K562 (cell line): ENCODE measurements at regions of chr1 and their contacts with region 1.

Region 1: DNA sequence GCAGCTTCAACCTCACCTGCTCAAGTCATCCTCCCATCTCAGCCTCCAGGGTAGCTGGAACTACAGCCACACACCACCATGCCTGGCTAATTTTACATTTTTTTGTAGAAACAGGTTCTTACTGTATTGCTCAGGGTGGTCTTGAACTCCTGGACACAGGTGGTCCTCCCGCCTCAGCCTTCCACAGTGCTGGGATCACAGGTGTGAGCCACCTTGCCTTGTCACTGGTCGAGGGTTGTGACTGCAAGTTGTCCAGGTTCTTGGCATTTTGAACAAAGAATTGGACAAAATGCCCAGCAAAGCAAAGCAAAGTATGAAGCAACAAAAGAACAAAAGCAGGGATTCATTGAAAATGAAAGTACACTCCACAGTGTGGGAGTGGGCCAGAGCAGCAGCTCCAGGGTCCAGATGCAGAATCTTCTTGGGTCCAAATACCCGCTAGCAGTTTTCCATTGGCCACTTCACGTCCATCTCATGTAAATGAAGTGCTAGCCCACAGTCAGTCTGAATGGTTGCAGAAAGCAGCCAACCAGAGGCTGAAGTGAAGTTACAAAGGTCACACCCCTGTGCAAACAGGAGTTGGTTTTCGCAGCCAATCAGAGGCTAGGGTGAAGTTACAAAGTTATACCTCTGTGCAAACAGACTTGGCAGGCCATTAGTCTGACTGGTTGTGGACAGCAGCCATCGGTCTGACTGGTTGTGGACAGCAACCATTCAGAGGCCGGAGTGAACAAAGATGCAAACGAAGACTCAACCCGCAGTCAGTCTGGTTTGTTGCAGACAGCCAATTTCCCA is 109.5 kb upstream of the KIF26B start:
- DNase-seq: peak in 1 of 4 experiments; percentile 35
- ATAC-seq: peak; percentile 75
- H3K4me3 ChIP-seq: no peak overlapping the region
- H3K27ac ChIP-seq: no peak overlapping the region
- H3K4me1 ChIP-seq: peaks cover 0 to 20% of the 10 kb centered on the region in 2 experiments; a peak in 3 of 5 replicates
- H3K27me3 ChIP-seq: no peaks in the 10 kb centered on the region
- CTCF ChIP-seq: no peak
- EP300 ChIP-seq: no peak
- POLR2A ChIP-seq: no peak
- RAD21 ChIP-seq: no peak

Region 2: DNA sequence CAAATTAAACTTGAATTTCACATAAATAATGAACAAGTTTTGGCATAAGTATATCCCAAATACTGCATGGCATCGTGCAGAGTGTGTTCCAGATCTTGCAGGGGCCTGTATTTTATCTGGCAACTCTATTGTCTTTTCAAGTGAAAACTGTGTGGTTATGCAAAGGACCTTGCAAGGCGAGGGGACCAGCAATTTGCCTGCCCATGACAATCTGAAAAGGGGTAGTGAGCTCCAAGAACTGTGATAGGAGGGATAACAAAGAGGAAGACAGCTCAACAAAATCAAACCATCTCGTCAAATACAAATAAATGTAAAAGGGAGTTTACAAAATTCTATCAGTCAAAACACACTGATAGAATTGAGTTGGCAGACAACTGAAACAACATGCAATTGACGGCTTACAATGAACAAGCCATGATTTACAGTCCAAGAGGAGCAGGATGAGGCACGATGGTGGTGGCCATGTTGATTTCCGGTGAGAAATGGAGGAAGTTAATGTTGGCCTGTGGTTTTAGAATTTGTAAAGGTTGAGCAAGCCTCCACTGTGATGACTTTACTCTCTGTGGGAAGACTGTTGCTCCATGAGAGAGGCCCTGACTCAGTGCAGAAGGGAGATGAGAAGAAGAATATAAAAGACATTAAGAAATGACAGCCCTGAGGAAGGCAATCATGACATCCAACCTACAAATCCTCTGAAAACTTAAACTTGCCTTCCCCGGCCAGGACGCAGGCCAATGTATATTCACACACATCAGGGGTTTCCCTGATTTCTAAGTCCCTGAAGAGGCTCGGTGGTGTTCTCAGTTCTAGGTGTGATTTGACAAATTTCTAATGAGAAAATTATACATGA is 725.8 kb before region 1 on chr1:
- CTCF ChIA-PET with region 1: no interaction called
- POLR2A ChIA-PET with region 1: no interaction called
- in situ Hi-C with region 1: no loop called
- intact Hi-C with region 1: no loop called
- DNase-seq: no peak
- ATAC-seq: no peak
- H3K4me3 ChIP-seq: no peak overlapping the region
- H3K27ac ChIP-seq: peak overlapping the region; percentile 36; the same call in 1 of the 3 replicates
- H3K4me1 ChIP-seq: peaks cover 9 to 37% of the 10 kb centered on the region in 2 experiments
- H3K27me3 ChIP-seq: no peaks in the 10 kb centered on the region
- CTCF ChIP-seq: no peak
- EP300 ChIP-seq: no peak
- POLR2A ChIP-seq: no peak
- RAD21 ChIP-seq: no peak

Region 3: GRCh38 chr1:244599937-244600350 is 445.3 kb before region 1 on chr1:
- CTCF ChIA-PET with region 1: interaction called, 8 read pairs
- POLR2A ChIA-PET with region 1: no interaction called
- in situ Hi-C with region 1: loop called (anchors 25 kb)
- intact Hi-C with region 1: loop called (anchors 1 kb)
- DNase-seq: peak; percentile 22 to 50 (median 26)
- ATAC-seq: peak; percentile 33
- H3K4me3 ChIP-seq: no peak overlapping the region
- H3K27ac ChIP-seq: no peak overlapping the region
- H3K4me1 ChIP-seq: no peaks in the 10 kb centered on the region; a peak in 2 of 5 replicates
- H3K27me3 ChIP-seq: peaks cover 23 to 37% of the 10 kb centered on the region in 2 experiments
- CTCF ChIP-seq: no peak
- EP300 ChIP-seq: peak; percentile 23; the same call in 1 of the 2 replicates
- POLR2A ChIP-seq: no peak
- RAD21 ChIP-seq: no peak

Region 4: GRCh38 chr1:244796718-244797406 is 248.4 kb before region 1 on chr1:
- CTCF ChIA-PET with region 1: interaction called, 5 read pairs
- POLR2A ChIA-PET with region 1: no interaction called
- in situ Hi-C with region 1: no loop called
- intact Hi-C with region 1: loop called (anchors 1 kb)
- DNase-seq: peak; percentile 62 to 80 (median 64)
- ATAC-seq: peak; percentile 77
- H3K4me3 ChIP-seq: no peak overlapping the region
- H3K27ac ChIP-seq: no peak overlapping the region
- H3K4me1 ChIP-seq: no peaks in the 10 kb centered on the region; a peak in 2 of 5 replicates
- H3K27me3 ChIP-seq: peaks cover 16 to 47% of the 10 kb centered on the region in 2 experiments
- CTCF ChIP-seq: peak; percentile 71 to 95 (median 91)
- EP300 ChIP-seq: no peak
- POLR2A ChIP-seq: no peak
- RAD21 ChIP-seq: peak; percentile 83 to 96

Region 5: DNA sequence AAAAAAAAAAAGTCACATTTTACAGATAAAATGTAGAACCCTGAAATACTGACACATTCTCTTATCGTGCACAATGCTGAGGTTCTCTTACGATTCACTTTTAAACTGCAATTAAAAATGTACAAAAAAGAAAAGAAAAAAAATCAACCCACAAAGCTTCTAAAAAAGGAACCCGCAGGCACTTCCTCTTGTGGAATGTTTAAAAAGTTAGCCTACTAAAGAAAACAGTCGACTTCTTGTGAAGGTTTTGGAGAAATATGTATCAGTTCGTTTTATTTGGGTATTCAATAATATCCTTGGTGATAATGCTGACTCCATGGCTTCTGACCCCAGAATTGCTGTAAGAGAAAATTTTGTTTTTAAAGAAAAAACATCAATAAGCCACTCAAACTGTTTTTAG is 191.1 kb before region 1 on chr1:
- CTCF ChIA-PET with region 1: no interaction called
- POLR2A ChIA-PET with region 1: interaction called, 11 read pairs
- in situ Hi-C with region 1: no loop called
- intact Hi-C with region 1: no loop called
- DNase-seq: no peak
- ATAC-seq: no peak
- H3K4me3 ChIP-seq: no peak overlapping the region
- H3K27ac ChIP-seq: no peak overlapping the region
- H3K4me1 ChIP-seq: no peaks in the 10 kb centered on the region
- H3K27me3 ChIP-seq: no peaks in the 10 kb centered on the region
- CTCF ChIP-seq: no peak
- EP300 ChIP-seq: no peak
- POLR2A ChIP-seq: no peak
- RAD21 ChIP-seq: no peak

Region 6: DNA sequence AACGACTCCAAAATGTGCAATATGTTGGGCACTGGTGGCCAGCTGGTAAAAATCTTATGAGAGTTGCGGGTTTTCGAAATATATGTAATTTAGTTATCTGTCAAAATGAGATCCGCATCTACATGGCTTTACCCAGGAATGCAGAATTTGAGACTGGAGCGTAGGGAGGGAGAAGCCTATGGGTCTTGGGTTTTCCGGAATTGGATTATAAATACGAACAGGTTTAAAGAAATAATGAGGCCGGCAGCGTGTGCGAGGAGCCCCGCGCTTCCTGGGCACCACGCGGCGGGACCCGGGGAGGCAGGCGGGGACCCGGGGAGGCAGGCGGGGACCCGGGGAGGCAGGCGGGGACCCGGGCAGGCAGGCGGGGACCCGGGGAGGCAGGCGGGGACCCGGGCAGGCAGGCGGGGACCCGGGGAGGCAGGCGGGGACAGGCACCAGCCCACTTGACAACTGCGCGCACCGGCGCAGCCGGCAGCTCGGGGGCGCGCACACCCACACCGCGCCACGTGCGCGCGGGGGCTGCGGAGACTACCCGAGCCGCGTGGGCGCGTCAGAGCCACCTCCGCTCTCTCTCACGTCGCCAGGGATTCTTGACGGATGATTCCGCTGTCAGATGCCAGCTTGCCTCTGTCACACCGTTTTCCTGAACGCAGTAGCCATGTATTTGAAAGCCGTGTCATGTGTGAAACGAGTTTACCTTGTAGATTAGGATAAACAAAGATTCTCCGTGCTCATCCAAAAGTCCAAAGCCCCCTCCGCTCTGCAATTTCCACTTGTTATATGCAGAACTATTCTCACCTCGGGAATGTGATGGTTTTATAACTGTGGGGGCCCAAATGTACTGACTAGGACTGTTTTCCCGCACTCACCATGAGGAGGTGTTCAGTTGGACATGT is 126.6 kb before region 1 on chr1:
- CTCF ChIA-PET with region 1: no interaction called
- POLR2A ChIA-PET with region 1: no interaction called
- in situ Hi-C with region 1: no loop called
- intact Hi-C with region 1: loop called (anchors 5 kb)
- DNase-seq: peak; percentile 84 to 86 (median 85)
- ATAC-seq: peak; percentile 92
- H3K4me3 ChIP-seq: peak overlapping the region; percentile 36
- H3K27ac ChIP-seq: peak overlapping the region; percentile 64
- H3K4me1 ChIP-seq: peaks cover 7 to 13% of the 10 kb centered on the region in 2 experiments; a peak in 3 of 5 replicates
- H3K27me3 ChIP-seq: no peaks in the 10 kb centered on the region
- CTCF ChIP-seq: 0 out of 6 replicates have a peak, but pooled peaks of 1 of the 3 experiments have one; percentile 36
- EP300 ChIP-seq: no peak
- POLR2A ChIP-seq: peak; percentile 78
- RAD21 ChIP-seq: peak in 1 of 2 experiments; percentile 17; a peak in 1 of 4 replicates